HAP-1 (cell line): ENCODE measurements at regions of chr13 and their contacts with region 1.

Region 1: GRCh38 chr13:77477299-77477848 is 58.1 kb upstream of the SCEL start:
- DNase-seq: no peak
- H3K4me3 ChIP-seq: no peak overlapping the region
- H3K4me1 ChIP-seq: peaks cover 10% of the 10 kb centered on the region
- H3K27me3 ChIP-seq: no peaks in the 10 kb centered on the region

Region 2: DNA sequence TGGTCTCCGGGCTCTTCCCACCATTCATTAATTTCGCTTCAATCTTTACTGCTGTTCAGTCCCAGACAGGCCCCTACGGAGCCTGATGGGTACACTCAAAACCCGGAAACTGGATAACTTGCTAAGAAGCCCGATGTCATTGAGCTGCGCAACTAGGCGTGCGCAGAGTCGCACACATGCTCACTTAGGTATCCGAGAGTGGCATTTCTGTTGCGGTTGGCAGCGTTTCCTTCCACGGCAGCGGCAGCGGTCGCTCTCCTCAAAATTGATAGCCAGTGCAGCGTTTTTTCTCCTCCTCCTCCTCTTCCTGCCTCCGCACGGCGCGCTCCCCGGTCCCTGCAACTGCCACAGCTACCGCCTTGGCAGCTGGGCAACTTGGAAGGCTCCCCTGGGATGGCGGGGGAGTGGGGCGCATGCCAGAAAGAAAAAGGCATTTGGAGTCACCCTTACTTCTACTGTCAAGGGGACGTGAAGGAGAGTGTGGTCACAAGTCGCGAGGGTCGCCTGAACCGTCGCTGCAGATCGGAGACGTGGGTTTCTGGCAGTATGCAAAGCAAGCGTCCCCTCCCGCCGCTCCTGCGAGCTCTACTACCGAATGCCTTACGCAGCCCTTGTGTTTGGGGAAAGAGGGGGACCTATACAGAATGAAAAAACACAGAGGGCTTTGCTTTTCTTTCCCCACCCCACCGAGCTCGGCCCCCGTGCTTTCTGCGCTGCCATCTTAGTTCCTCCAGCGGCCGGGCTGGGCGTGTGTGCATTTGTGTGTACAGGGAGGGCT is 148.1 kb before region 1 on chr13:
- in situ Hi-C with region 1: loop called (anchors 5 kb)
- DNase-seq: peak; percentile 88 to 94
- H3K4me3 ChIP-seq: peak overlapping the region; percentile 62
- H3K4me1 ChIP-seq: peaks cover 26% of the 10 kb centered on the region
- H3K27me3 ChIP-seq: no peaks in the 10 kb centered on the region